Caco-2 (cell line): ENCODE measurements at regions of chr6 and their contacts with region 1.

Region 1: DNA sequence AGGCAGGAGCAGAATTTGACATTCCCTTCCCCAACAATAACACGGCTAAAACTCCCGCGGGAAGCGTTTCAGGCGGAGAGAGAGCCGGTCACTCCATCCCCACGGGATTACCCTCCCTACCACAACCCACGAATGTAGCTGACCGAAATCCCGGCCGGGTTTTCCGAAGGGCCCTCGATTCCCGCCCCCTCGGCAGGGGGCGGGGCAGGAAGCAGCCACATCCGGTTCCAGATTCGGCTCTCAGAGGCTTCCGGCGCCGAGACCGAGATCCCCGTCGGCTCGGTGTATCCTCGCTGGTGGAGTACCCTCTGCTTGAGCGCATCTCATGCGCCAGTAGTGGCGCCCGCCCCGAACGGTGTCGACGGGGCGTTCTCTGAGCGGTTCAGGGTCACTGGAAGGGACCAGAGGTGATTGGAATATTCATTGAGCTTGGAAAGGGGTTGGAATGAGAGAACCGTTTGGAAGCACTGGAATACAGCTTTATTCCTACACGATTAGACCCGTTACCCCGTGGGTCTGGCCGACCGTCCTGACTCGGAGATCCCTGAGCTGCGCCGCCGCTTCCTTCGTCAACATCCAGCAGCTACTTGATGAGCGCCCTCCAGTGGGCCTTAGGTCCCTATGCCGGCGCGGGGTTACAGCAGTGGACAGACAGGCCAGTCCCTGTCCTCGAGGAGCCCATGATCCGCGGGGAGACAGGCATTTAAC is 649 bp upstream of the RGL2 start:
- DNase-seq: peak; percentile 89 to 91
- H3K4me3 ChIP-seq: peak overlapping the region; percentile 90
- H3K4me3 Mint-ChIP-seq: peak overlapping the region; percentile 95
- H3K27ac Mint-ChIP-seq: peak overlapping the region; percentile 98
- H3K4me1 ChIP-seq: peaks cover 13% of the 10 kb centered on the region
- H3K4me1 Mint-ChIP-seq: peaks cover 13% of the 10 kb centered on the region
- H3K27me3 ChIP-seq: no peaks in the 10 kb centered on the region
- H3K27me3 Mint-ChIP-seq: no peaks in the 10 kb centered on the region
- CTCF ChIP-seq: peak; percentile 65 to 80

Region 2: DNA sequence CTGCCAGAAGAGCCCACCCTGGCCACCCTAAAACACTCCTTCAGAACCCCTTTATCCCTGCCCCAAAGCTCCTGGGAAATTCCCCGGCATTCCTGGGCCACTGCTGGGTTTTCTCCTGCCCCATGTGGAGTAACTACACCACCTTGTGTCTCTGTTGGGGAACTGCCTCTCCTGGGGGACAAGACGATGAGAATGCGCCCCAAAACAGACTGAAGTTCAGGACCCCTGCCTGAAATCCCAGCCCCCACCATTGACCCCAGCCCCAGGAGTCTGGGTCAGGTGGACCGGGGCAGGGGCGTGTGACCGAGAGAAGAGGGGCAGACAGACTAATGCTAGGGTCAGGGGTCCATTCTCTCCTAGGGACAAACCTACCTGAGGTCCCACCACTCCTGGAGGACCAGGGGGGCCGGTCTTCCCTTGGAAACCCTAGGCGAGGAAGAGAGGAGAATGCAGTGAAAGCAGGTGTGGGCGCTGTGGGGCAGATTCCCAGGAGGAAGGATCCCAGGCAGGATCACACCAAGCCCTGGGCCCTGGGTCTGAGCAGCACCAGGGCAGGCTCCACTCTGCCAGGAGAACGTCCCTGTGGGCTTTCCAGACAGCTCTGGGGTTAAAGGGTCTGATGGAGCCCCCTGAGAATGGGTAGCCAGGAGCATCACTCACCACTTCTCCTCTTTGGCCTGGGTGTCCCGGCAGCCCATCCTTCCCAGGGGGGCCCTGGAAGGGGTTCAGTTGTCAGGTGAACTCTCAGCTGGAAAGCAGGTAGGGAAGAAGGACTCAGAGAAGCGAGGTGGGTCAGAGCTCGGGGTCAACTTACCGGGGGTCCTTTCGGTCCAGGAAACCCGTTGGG is 126.5 kb before region 1 on chr6:
- CTCF ChIA-PET with region 1: no interaction called
- POLR2A ChIA-PET with region 1: interaction called, 13 read pairs
- intact Hi-C with region 1: no loop called
- DNase-seq: peak; percentile 27 to 46
- H3K4me3 ChIP-seq: no peak overlapping the region
- H3K4me3 Mint-ChIP-seq: no peak overlapping the region
- H3K27ac Mint-ChIP-seq: peak overlapping the region; percentile 30
- H3K4me1 ChIP-seq: no peaks in the 10 kb centered on the region
- H3K4me1 Mint-ChIP-seq: no peaks in the 10 kb centered on the region
- H3K27me3 ChIP-seq: no peaks in the 10 kb centered on the region
- H3K27me3 Mint-ChIP-seq: peaks cover 19% of the 10 kb centered on the region
- CTCF ChIP-seq: peak; percentile 63 to 76

Region 3: DNA sequence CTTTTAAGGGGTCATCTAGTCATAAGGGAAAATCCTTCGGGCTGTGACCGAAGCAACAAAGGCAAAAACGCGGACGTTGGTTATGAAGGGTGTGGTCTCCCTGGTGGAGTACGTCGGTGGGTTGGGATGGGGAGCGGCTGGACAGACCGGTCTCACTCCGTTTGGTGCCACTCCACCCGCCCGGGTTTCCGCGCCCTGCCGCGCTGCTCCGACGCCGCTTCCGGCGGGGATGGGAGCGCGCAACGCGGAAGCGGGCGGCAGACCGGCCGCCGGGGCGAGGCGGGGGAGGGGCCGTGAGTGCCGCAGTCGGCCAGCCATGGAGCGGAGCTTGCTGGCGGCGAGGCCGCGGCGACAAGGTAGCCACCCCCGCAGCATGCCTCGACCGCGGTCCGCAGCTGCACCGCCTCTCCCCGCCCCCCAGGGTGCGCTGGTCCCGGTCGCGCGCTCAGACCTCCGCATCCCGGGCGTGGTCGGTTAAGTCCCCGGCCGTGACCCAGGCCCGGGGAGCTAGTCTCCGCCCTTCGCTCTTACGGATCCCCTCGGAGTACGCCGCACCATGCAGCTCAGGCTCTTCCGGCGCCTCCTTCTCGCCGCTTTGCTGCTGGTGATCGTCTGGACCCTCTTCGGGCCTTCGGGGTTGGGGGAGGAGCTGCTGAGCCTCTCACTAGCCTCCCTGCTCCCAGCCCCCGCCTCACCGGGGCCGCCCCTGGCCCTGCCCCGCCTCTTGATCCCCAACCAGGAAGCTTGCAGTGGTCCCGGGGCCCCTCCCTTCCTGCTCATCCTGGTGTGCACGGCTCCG is 22.3 kb before region 1 on chr6 and contains the start of gene B3GALT4:
- CTCF ChIA-PET with region 1: interaction called, 8 read pairs
- POLR2A ChIA-PET with region 1: interaction called, 9 read pairs
- intact Hi-C with region 1: loop called (anchors 1 kb)
- DNase-seq: peak in 1 of 2 experiments; percentile 55
- H3K4me3 ChIP-seq: no peak within 1 kb of the TSS
- H3K4me3 Mint-ChIP-seq: peak within 1 kb of the TSS; percentile 56
- H3K27ac Mint-ChIP-seq: peak within 1 kb of the TSS; percentile 18
- H3K4me1 ChIP-seq: peaks cover 18% of the 10 kb centered on the region
- H3K4me1 Mint-ChIP-seq: peaks cover 18% of the 10 kb centered on the region
- H3K27me3 ChIP-seq: no peaks in the 10 kb centered on the region
- H3K27me3 Mint-ChIP-seq: no peaks in the 10 kb centered on the region
- CTCF ChIP-seq: peak; percentile 10 to 44
- total RNA-seq, gene B3GALT4: 0.34 and 0.67 TPM in 2 replicates

Region 4: GRCh38 chr6:33288921-33289748 is 10.3 kb before region 1 on chr6 and contains the starts of genes PFDN6 and WDR46:
- CTCF ChIA-PET with region 1: interaction called, 9 read pairs
- POLR2A ChIA-PET with region 1: interaction called, 9 read pairs
- intact Hi-C with region 1: loop called (anchors 1 kb)
- DNase-seq: peak; percentile 79 to 83
- H3K4me3 ChIP-seq: peak within 1 kb of the TSS; percentile 65
- H3K4me3 Mint-ChIP-seq: peak within 1 kb of the TSS; percentile 87
- H3K27ac Mint-ChIP-seq: peak within 1 kb of the TSS; percentile 94
- H3K4me1 ChIP-seq: peaks cover 7% of the 10 kb centered on the region; the same call in 1 of the 2 replicates
- H3K4me1 Mint-ChIP-seq: peaks cover 13% of the 10 kb centered on the region
- H3K27me3 ChIP-seq: no peaks in the 10 kb centered on the region
- H3K27me3 Mint-ChIP-seq: no peaks in the 10 kb centered on the region
- CTCF ChIP-seq: no peak
- total RNA-seq, gene PFDN6: 65.9 and 81.8 TPM in 2 replicates
- total RNA-seq, gene WDR46: 58.2 and 62.2 TPM in 2 replicates

Region 5: DNA sequence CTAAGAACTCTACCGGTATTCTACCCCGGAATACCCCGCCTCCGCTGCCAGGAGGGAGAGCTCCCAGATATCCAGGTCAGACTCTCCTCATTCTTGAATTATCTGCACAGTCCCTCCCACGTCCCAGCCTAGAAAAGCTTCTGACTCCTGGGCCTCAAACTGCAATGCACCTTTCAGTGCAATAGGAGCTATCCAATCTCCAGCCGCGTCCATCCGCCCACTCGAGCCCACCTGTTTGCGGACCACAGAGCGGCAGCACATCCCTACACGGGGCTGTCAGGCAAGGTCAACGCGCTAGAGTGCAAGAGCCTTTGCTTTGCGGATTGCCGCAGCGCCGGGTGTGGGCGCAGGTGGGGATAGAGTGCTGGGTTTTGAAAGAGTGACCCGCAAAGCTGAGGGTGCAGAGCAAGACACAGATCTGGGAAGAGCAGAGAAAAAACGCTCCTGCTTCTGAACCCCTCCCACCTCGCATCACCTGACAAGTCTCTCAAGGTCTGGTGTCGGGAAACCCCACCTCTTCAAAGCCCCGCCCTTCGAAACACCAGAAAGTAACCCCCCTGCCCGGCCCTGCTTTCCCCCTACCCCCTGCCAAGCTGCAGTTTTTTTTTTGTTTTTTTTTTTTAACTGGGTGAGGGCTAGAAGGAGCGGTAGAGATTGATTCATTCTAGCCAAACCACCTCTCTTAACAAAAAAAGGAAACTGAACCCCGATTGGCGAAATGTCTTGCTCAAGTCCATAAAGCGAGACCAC is 13.2 kb after region 1 on chr6:
- CTCF ChIA-PET with region 1: interaction called, 20 read pairs
- POLR2A ChIA-PET with region 1: interaction called, 19 read pairs
- intact Hi-C with region 1: loop called (anchors 1 kb)
- DNase-seq: peak; percentile 85 to 88
- H3K4me3 ChIP-seq: peak overlapping the region; percentile 85
- H3K4me3 Mint-ChIP-seq: peak overlapping the region; percentile 98
- H3K27ac Mint-ChIP-seq: peak overlapping the region; percentile 97
- H3K4me1 ChIP-seq: peaks cover 15% of the 10 kb centered on the region
- H3K4me1 Mint-ChIP-seq: peaks cover 8% of the 10 kb centered on the region
- H3K27me3 ChIP-seq: no peaks in the 10 kb centered on the region
- H3K27me3 Mint-ChIP-seq: no peaks in the 10 kb centered on the region
- CTCF ChIP-seq: peak in 1 of 2 experiments; percentile 19

Region 6: DNA sequence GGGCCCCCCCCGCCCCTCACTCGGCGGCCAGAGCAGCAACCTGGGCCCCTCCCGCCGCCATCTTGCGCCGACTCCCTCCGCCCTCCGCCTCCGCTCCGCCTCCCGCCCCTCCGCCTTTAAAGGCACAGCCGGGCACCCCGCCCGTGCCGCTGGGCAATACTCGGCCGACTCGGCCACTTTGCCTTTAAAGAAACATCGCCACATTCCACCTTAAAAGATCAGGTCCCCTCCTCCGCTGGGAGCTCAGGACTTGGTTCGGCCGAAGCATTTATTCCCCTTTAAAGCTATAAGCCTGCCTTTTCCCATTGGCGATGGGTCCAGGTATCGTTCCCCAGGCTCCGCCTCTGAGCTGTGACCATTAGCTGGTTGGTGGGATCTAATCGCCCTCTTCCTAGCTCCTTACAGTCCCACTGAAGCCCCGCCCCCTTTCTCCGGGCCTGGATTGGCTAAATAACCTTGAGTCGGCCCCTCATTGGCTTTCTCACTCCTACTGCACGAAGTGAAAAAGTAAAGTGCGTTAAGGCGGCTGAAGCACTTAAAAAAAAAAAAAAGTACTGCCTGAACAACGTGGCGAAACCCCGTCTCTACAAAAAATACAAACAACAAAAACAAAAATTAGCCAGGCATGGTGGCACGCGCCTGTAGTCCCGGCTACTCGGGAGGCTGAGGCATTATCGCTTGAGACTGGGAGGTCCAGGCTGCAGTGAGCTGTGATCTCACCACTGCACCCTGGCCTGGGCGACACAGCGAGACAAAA is 18.5 kb after region 1 on chr6 and contains the start of gene ZBTB22:
- CTCF ChIA-PET with region 1: interaction called, 20 read pairs
- POLR2A ChIA-PET with region 1: interaction called, 19 read pairs
- intact Hi-C with region 1: no loop called
- DNase-seq: peak; percentile 98 to 99
- H3K4me3 ChIP-seq: peak within 1 kb of the TSS; percentile 73
- H3K4me3 Mint-ChIP-seq: peak within 1 kb of the TSS; percentile 89
- H3K27ac Mint-ChIP-seq: peak within 1 kb of the TSS; percentile 90
- H3K4me1 ChIP-seq: peaks cover 22% of the 10 kb centered on the region
- H3K4me1 Mint-ChIP-seq: peaks cover 45% of the 10 kb centered on the region
- H3K27me3 ChIP-seq: no peaks in the 10 kb centered on the region
- H3K27me3 Mint-ChIP-seq: no peaks in the 10 kb centered on the region
- CTCF ChIP-seq: no peak
- total RNA-seq, gene ZBTB22: 11.5 and 12.6 TPM in 2 replicates

Region 7: GRCh38 chr6:33425668-33426577 is 126.5 kb after region 1 on chr6:
- CTCF ChIA-PET with region 1: interaction called, 4 read pairs
- POLR2A ChIA-PET with region 1: interaction called, 4 read pairs
- intact Hi-C with region 1: loop called (anchors 5 kb)
- DNase-seq: peak; percentile 91 to 93
- H3K4me3 ChIP-seq: peak overlapping the region; percentile 71
- H3K4me3 Mint-ChIP-seq: peak overlapping the region; percentile 81
- H3K27ac Mint-ChIP-seq: peak overlapping the region; percentile 75
- H3K4me1 ChIP-seq: peaks cover 39% of the 10 kb centered on the region
- H3K4me1 Mint-ChIP-seq: peaks cover 23% of the 10 kb centered on the region
- H3K27me3 ChIP-seq: no peaks in the 10 kb centered on the region
- H3K27me3 Mint-ChIP-seq: peaks cover 7% of the 10 kb centered on the region
- CTCF ChIP-seq: peak; percentile 74 to 82